Stomach (tissue), 19 donors: ENCODE measurements at regions of chr1 and their contacts with region 1.

Region 1: DNA sequence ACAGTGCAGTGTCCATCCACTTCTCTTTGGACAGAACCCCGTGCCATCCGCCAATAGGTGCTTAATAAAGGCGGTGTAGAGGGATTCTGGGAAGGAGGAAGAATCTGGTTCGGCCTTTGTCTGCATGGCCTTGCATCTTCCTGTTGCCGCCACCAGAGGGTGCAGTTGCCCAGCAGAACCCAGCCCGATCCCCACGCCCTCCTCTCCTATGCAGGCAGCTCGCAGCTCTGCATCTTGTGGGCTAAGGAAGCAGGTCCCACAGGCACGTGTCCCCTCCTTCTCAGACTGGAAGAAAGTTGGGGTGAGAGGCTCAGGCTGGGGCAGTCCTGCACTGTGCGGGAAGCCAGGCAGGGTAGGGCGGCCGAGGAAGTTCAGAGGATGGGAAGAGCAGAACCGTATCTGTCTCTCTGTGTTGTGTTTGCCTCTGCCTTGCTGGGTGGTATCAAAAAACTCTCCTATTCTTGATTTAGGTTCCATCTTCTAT is 20.8 kb downstream of the NAV1 start:
- DNase-seq: peak; percentile 81 to 94
- H3K4me3 ChIP-seq: no peak overlapping the region
- H3K27ac ChIP-seq: peak overlapping the region in 1 of 5 donors; percentile 28
- H3K4me1 ChIP-seq: peaks cover 10 to 42% (median 17%) of the 10 kb centered on the region in 4 donors
- H3K27me3 ChIP-seq: no peaks in the 10 kb centered on the region
- CTCF ChIP-seq: peak in 5 of 7 experiments; percentile 89 to 99 (median 97)
- EP300 ChIP-seq: no peak
- POLR2A ChIP-seq: no peak

Region 2: DNA sequence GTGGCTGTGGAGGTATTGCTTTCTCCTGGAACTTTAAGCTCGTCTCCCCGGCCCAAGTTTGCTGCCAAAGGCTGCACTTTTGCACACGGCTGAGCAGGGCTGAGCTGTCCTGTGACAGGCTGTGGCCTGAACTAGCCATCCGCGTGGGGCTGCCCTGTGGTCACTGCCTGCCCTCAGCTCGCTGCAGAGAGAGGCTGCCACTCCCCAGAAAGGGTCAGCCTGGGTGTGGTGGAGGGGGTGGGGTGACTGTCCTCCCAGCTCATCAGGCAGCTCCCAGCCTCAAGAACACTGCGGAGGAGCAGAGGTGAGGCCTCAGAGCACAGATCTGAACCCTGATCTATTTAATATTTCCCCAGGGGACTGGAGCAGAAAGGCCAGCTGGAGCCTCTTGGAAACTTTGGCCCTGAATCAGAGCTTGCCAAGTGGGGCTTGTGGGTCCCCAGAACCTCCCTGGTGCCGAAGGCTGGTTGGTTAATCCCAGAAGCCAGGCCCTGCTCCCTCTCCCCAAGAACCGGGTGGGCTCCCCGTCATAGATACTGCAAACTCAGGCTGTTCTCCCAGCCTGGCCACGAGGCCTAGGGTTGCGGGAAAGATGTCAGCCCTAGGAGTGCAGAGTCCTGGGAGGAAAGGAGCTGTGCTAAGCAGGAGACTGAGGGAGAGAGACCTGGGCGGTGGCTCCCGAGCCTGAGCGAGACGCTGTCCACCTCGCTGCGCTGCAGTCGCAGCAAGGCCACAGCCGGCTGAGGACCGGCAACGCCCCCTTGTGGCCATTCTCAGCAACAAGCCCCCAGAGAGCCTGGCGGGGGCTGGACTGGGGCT is 144.1 kb after region 1 on chr1:
- intact Hi-C with region 1: loop called (anchors 2 kb)
- DNase-seq: peak; percentile 88 to 94
- H3K4me3 ChIP-seq: no peak overlapping the region
- H3K27ac ChIP-seq: peak overlapping the region; percentile 14 to 67 (median 61)
- H3K4me1 ChIP-seq: peaks cover 11 to 26% (median 17%) of the 10 kb centered on the region in 4 donors
- H3K27me3 ChIP-seq: no peaks in the 10 kb centered on the region
- CTCF ChIP-seq: peak in 6 of 7 experiments; percentile 91 to 98 (median 94)
- EP300 ChIP-seq: no peak
- POLR2A ChIP-seq: no peak

Region 3: GRCh38 chr1:201792534-201793305 is 233.0 kb after region 1 on chr1:
- intact Hi-C with region 1: loop called (anchors 10 kb)
- DNase-seq: peak; percentile 81 to 92
- H3K4me3 ChIP-seq: no peak overlapping the region
- H3K27ac ChIP-seq: peak overlapping the region in 4 of 5 donors; percentile 60 to 81 (median 76)
- H3K4me1 ChIP-seq: peaks cover 18 to 42% (median 34%) of the 10 kb centered on the region in 4 donors
- H3K27me3 ChIP-seq: no peaks in the 10 kb centered on the region
- CTCF ChIP-seq: peak in 5 of 7 experiments; percentile 89 to 100 (median 95)
- EP300 ChIP-seq: no peak
- POLR2A ChIP-seq: no peak